GM12878 (cell line): ENCODE measurements at regions of chr9 and their contacts with region 1.

Region 1: GRCh38 chr9:3809724-3810123 is 283.9 kb upstream of the RFX3 start:
- DNase-seq: peak; percentile 4
- ATAC-seq: peak; percentile 62
- H3K4me3 ChIP-seq: no peak overlapping the region
- H3K27ac ChIP-seq: no peak overlapping the region
- H3K4me1 ChIP-seq: no peaks in the 10 kb centered on the region
- H3K27me3 ChIP-seq: no peaks in the 10 kb centered on the region
- CTCF ChIP-seq: no peak
- EP300 ChIP-seq: no peak
- POLR2A ChIP-seq: no peak
- RAD21 ChIP-seq: no peak

Region 2: DNA sequence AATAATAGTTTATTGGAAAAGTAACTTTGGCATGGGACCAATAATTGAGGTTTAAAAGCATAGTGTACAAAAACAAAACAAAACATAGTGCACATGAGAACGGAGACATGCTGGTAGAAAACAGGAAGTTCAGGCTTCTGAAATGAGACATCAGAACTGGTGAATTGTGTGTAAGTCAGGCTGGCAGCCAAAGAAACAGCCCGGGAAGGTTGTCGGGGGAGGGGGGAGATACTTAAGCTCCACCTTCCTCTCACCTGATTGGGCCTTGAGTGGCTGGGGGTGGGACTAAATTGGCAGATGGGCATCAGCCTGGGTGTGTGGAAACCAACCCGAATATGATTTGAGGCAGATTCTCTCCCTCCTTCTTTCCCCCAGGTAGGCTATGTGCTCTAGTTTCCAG is 1538.3 kb before region 1 on chr9:
- CTCF ChIA-PET with region 1: no interaction called
- POLR2A ChIA-PET with region 1: no interaction called
- RAD21 ChIA-PET with region 1: no interaction called
- SMC1A ChIA-PET with region 1: no interaction called
- in situ Hi-C with region 1: loop called (anchors 10 kb)
- intact Hi-C with region 1: loop called (anchors 10 kb)
- DNase-seq: peak; percentile 37
- ATAC-seq: peak; percentile 97
- H3K4me3 ChIP-seq: no peak overlapping the region
- H3K27ac ChIP-seq: no peak overlapping the region
- H3K4me1 ChIP-seq: no peaks in the 10 kb centered on the region
- H3K27me3 ChIP-seq: no peaks in the 10 kb centered on the region; a peak in 2 of 4 replicates
- CTCF ChIP-seq: no peak
- EP300 ChIP-seq: no peak
- POLR2A ChIP-seq: no peak
- RAD21 ChIP-seq: no peak

Region 3: DNA sequence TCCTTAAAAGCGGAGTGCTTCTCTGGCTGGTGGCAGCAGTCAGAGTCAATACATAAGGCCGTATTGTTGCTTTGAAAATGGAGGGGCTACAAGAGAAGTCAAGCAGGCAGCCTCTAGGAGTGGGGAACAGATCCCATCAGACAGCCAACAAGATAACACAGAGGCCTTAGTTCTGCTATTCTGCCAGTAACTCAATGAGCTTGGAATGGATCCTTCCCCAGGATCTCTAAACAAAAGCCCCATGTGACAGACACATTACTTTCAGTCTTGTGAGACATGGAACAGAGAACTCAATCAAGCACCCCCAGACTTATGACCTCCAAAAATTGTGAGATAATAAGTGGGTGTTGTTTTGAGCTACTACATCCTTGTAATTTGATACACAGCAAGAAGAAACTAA is 442.5 kb before region 1 on chr9:
- CTCF ChIA-PET with region 1: no interaction called
- POLR2A ChIA-PET with region 1: no interaction called
- RAD21 ChIA-PET with region 1: no interaction called
- SMC1A ChIA-PET with region 1: no interaction called
- in situ Hi-C with region 1: no loop called
- intact Hi-C with region 1: no loop called
- DNase-seq: no peak
- ATAC-seq: no peak
- H3K4me3 ChIP-seq: no peak overlapping the region
- H3K27ac ChIP-seq: no peak overlapping the region
- H3K4me1 ChIP-seq: no peaks in the 10 kb centered on the region
- H3K27me3 ChIP-seq: no peaks in the 10 kb centered on the region
- CTCF ChIP-seq: no peak
- EP300 ChIP-seq: no peak
- POLR2A ChIP-seq: no peak
- RAD21 ChIP-seq: no peak